ENCODE measurements at regions of chr6 and their contacts with region 1.

Region 1: DNA sequence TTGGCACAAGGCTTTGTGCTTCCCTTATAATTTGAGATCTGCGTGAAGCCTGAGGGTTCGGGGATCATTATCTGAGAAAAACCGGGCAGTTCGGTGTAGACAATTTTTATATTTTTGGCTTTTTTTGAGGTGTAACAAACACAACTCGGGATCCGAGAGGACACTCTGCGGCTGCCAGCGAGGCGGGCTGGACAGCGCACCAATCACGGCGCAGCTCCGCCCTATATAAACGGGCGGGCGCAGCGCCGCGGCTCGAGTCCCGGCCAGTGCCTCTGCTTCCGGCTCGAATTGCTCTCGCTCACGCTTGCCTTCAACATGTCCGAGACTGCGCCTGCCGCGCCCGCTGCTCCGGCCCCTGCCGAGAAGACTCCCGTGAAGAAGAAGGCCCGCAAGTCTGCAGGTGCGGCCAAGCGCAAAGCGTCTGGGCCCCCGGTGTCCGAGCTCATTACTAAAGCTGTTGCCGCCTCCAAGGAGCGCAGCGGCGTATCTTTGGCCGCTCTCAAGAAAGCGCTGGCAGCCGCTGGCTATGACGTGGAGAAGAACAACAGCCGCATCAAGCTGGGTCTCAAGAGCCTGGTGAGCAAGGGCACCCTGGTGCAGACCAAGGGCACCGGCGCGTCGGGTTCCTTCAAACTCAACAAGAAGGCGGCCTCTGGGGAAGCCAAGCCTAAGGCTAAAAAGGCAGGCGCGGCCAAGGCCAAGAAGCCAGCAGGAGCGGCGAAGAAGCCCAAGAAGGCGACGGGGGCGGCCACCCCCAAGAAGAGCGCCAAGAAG is 69.0 kb downstream of the HFE start:
- DNase-seq: peak; percentile 87
- ATAC-seq: peak; percentile 82
- H3K4me3 ChIP-seq: peak overlapping the region; percentile 59 to 94
- H3K27ac ChIP-seq: peak overlapping the region; percentile 99
- H3K4me1 ChIP-seq: peaks cover 11% of the 10 kb centered on the region
- H3K27me3 ChIP-seq: no peaks in the 10 kb centered on the region
- CTCF ChIP-seq: no peak

Region 2: DNA sequence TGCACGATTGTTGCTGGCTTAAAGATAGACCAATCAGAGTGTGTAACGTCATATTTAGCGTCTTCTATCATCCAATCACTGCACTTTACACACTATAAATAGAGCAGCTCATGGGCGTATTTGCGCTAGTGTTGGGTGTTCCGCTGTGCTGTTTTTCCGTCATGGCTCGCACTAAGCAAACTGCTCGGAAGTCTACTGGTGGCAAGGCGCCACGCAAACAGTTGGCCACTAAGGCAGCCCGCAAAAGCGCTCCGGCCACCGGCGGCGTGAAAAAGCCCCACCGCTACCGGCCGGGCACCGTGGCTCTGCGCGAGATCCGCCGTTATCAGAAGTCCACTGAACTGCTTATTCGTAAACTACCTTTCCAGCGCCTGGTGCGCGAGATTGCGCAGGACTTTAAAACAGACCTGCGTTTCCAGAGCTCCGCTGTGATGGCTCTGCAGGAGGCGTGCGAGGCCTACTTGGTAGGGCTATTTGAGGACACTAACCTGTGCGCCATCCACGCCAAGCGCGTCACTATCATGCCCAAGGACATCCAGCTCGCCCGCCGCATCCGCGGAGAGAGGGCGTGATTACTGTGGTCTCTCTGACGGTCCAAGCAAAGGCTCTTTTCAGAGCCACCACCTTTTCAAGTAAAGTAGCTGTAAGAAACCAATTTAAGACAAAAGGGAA is 135.8 kb before region 1 on chr6:
- CTCF ChIA-PET with region 1: no interaction called
- POLR2A ChIA-PET with region 1: interaction called, 12 read pairs
- in situ Hi-C with region 1: no loop called
- intact Hi-C with region 1: no loop called
- DNase-seq: no peak
- ATAC-seq: peak; percentile 74
- H3K4me3 ChIP-seq: peak overlapping the region; percentile 80 to 81
- H3K27ac ChIP-seq: peak overlapping the region; percentile 100
- H3K4me1 ChIP-seq: peaks cover 20% of the 10 kb centered on the region
- H3K27me3 ChIP-seq: no peaks in the 10 kb centered on the region
- CTCF ChIP-seq: no peak

Region 3: GRCh38 chr6:26045065-26045927 is 111.0 kb before region 1 on chr6:
- CTCF ChIA-PET with region 1: no interaction called
- POLR2A ChIA-PET with region 1: interaction called, 10 read pairs
- in situ Hi-C with region 1: no loop called
- intact Hi-C with region 1: no loop called
- DNase-seq: peak; percentile 98
- ATAC-seq: peak; percentile 69
- H3K4me3 ChIP-seq: peak overlapping the region; percentile 52 to 60
- H3K27ac ChIP-seq: peak overlapping the region; percentile 99
- H3K4me1 ChIP-seq: peaks cover 36% of the 10 kb centered on the region
- H3K27me3 ChIP-seq: no peaks in the 10 kb centered on the region
- CTCF ChIP-seq: peak; percentile 44

Region 4: GRCh38 chr6:26122793-26123674 is 33.2 kb before region 1 on chr6:
- CTCF ChIA-PET with region 1: no interaction called
- POLR2A ChIA-PET with region 1: interaction called, 88 read pairs
- in situ Hi-C with region 1: no loop called
- intact Hi-C with region 1: loop called (anchors 1 kb)
- DNase-seq: peak; percentile 95
- ATAC-seq: peak; percentile 65
- H3K4me3 ChIP-seq: peak overlapping the region; percentile 82 to 100
- H3K27ac ChIP-seq: peak overlapping the region; percentile 100
- H3K4me1 ChIP-seq: peaks cover 38% of the 10 kb centered on the region
- H3K27me3 ChIP-seq: no peaks in the 10 kb centered on the region
- CTCF ChIP-seq: no peak

Region 5: DNA sequence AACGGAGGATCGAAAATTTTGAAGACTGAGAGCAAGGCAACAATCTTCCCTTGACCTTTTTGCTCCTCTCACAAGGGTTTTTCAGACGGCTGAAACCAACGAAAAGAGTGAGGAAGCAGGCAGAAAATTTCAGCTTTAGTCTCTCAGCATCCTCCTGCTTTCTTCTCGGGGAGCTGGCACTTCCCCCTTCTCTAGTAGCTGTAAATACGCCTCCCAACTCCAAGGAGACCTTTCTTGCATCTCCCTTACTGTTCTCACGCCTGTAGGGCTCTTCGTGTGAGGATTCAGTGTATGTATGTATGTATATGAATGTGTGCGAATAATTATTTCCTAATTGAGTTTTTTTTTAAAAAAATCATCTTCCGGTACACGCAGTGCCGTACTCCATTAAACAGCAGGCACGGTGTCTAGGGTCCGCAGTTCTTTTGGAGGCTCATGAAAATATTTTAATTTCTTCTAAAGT is 16.3 kb after region 1 on chr6:
- CTCF ChIA-PET with region 1: no interaction called
- POLR2A ChIA-PET with region 1: interaction called, 11 read pairs
- in situ Hi-C with region 1: no loop called
- intact Hi-C with region 1: no loop called
- DNase-seq: no peak
- ATAC-seq: peak; percentile 46
- H3K4me3 ChIP-seq: peak overlapping the region; percentile 74 to 87
- H3K27ac ChIP-seq: peak overlapping the region; percentile 99
- H3K4me1 ChIP-seq: peaks cover 33% of the 10 kb centered on the region
- H3K27me3 ChIP-seq: no peaks in the 10 kb centered on the region
- CTCF ChIP-seq: no peak

Region 6: DNA sequence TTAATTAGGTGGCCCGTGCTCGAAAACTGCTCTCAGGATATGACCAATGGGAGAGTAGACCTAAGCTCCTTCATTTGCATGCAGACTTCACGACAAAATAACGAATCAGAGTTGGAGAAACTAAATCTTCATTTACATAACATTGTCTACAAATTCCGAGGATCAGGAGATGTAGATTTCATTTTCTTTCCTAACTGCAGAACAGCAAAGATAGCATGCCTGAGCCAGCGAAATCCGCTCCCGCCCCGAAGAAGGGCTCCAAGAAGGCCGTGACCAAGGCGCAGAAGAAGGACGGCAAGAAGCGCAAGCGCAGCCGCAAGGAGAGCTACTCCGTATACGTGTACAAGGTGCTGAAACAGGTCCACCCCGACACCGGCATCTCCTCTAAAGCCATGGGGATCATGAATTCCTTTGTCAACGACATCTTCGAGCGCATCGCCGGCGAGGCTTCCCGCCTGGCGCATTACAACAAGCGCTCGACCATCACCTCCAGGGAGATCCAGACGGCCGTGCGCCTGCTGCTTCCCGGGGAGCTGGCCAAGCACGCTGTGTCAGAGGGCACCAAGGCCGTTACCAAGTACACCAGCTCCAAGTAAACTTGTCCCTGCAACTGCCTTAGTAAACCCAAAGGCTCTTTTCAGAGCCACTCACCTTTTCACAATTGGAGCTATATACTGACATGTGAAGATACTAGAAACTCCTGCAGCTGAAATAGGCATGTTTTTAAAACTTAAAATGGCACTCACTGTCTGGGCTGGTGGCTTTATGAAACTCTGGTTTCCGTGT is 27.5 kb after region 1 on chr6:
- CTCF ChIA-PET with region 1: no interaction called
- POLR2A ChIA-PET with region 1: interaction called, 14 read pairs
- in situ Hi-C with region 1: no loop called
- intact Hi-C with region 1: no loop called
- DNase-seq: peak; percentile 93
- ATAC-seq: peak; percentile 86
- H3K4me3 ChIP-seq: peak overlapping the region; percentile 51 to 66
- H3K27ac ChIP-seq: peak overlapping the region; percentile 95
- H3K4me1 ChIP-seq: peaks cover 30% of the 10 kb centered on the region
- H3K27me3 ChIP-seq: no peaks in the 10 kb centered on the region
- CTCF ChIP-seq: no peak

Region 7: GRCh38 chr6:26196846-26197648 is 40.8 kb after region 1 on chr6:
- CTCF ChIA-PET with region 1: no interaction called
- POLR2A ChIA-PET with region 1: interaction called, 17 read pairs
- in situ Hi-C with region 1: no loop called
- intact Hi-C with region 1: loop called (anchors 5 kb)
- DNase-seq: peak; percentile 80
- ATAC-seq: peak; percentile 59
- H3K4me3 ChIP-seq: peak overlapping the region; percentile 80 to 85
- H3K27ac ChIP-seq: peak overlapping the region; percentile 97
- H3K4me1 ChIP-seq: peaks cover 27% of the 10 kb centered on the region
- H3K27me3 ChIP-seq: no peaks in the 10 kb centered on the region
- CTCF ChIP-seq: no peak